Uterus (tissue), 4 donors: ENCODE measurements at regions of chr1 and their contacts with region 1.

Region 1: GRCh38 chr1:92858564-92859399 is 26.9 kb downstream of the RPL5 start:
- DNase-seq: peak; percentile 31 to 71
- H3K4me3 ChIP-seq: no peak overlapping the region
- H3K27ac ChIP-seq: peak overlapping the region; percentile 39 to 57
- H3K4me1 ChIP-seq: no peaks in the 10 kb centered on the region
- H3K27me3 ChIP-seq: no peaks in the 10 kb centered on the region
- CTCF ChIP-seq: peak; percentile 91 to 99 (median 97)
- POLR2A ChIP-seq: no peak

Region 2: DNA sequence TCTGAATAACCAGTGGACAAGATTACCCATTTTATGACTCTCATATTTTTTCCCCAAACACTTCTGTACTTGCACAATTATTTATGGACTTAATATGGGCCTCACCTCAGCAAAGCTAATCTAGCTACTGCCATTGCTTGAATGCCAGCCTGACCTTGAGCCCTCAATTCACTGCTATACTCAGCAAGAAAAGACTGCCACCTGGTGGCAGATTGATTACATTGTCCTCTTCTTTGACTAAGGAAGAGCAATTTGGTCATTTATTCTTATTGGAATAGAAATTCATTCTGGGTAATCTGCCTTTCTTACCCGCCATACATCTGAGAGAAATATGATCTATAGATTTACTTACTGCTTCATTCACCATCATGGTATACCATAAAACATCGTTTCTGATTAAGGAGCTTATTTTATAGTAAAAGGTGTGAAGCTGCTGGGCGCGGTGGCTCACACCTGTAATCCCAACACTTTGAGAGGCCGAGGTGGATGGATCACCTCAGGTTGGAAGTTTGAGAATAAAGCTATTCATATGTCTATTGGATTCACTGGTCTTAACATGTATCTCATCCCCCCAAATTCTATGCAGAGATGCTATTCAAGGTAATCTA is 135.4 kb after region 1 on chr1:
- intact Hi-C with region 1: loop called (anchors 10 kb)
- DNase-seq: peak; percentile 52 to 87
- H3K4me3 ChIP-seq: no peak overlapping the region
- H3K27ac ChIP-seq: no peak overlapping the region
- H3K4me1 ChIP-seq: no peaks in the 10 kb centered on the region
- H3K27me3 ChIP-seq: no peaks in the 10 kb centered on the region
- CTCF ChIP-seq: peak; percentile 80 to 94 (median 88)
- POLR2A ChIP-seq: no peak

Region 3: DNA sequence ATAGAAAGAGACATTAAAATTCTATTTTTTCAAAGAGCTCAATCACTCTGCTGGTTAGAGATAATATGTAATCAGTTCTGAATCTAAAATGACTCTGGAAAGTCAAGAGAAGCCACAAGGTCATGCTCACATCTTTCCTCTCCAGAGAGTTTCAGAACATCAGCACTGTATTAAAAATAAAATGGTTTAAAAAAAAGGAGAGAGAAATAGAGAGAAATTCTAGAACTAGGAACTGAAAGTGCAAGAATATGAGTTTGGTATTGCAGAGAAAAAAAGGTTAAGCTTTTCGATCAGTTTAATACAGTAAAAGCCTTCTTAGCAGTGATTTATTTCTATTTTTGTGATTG is 146.4 kb after region 1 on chr1:
- intact Hi-C with region 1: no loop called
- DNase-seq: no peak
- H3K4me3 ChIP-seq: no peak overlapping the region
- H3K27ac ChIP-seq: no peak overlapping the region
- H3K4me1 ChIP-seq: peaks cover 0 to 5% of the 10 kb centered on the region in 2 donors
- H3K27me3 ChIP-seq: no peaks in the 10 kb centered on the region
- CTCF ChIP-seq: no peak
- POLR2A ChIP-seq: no peak